PC-9 (cell line): ENCODE measurements at regions of chr6 and their contacts with region 1.

Region 1: GRCh38 chr6:36851149-36851614 is 11.9 kb upstream of the CPNE5 start:
- DNase-seq: peak; percentile 34 to 47
- H3K4me3 ChIP-seq: no peak overlapping the region
- H3K27ac ChIP-seq: no peak overlapping the region
- H3K4me1 ChIP-seq: peaks cover 22% of the 10 kb centered on the region
- H3K27me3 ChIP-seq: no peaks in the 10 kb centered on the region
- CTCF ChIP-seq: peak; percentile 93

Region 2: GRCh38 chr6:36563237-36563927 is 287.8 kb before region 1 on chr6:
- CTCF ChIA-PET with region 1: no interaction called
- POLR2A ChIA-PET with region 1: no interaction called
- intact Hi-C with region 1: no loop called
- DNase-seq: no peak
- H3K4me3 ChIP-seq: no peak overlapping the region
- H3K27ac ChIP-seq: no peak overlapping the region
- H3K4me1 ChIP-seq: peaks cover 12% of the 10 kb centered on the region
- H3K27me3 ChIP-seq: no peaks in the 10 kb centered on the region
- CTCF ChIP-seq: no peak

Region 3: GRCh38 chr6:36765594-36766398 is 85.4 kb before region 1 on chr6:
- CTCF ChIA-PET with region 1: interaction called, 17 read pairs
- POLR2A ChIA-PET with region 1: no interaction called
- intact Hi-C with region 1: loop called (anchors 1 kb)
- DNase-seq: peak; percentile 50 to 78
- H3K4me3 ChIP-seq: no peak overlapping the region
- H3K27ac ChIP-seq: no peak overlapping the region
- H3K4me1 ChIP-seq: peaks cover 24% of the 10 kb centered on the region
- H3K27me3 ChIP-seq: no peaks in the 10 kb centered on the region
- CTCF ChIP-seq: peak; percentile 92

Region 4: GRCh38 chr6:36827261-36828079 is 23.7 kb before region 1 on chr6:
- CTCF ChIA-PET with region 1: interaction called, 10 read pairs
- POLR2A ChIA-PET with region 1: interaction called, 53 read pairs
- intact Hi-C with region 1: no loop called
- DNase-seq: peak; percentile 70 to 83
- H3K4me3 ChIP-seq: no peak overlapping the region
- H3K27ac ChIP-seq: no peak overlapping the region
- H3K4me1 ChIP-seq: peaks cover 13% of the 10 kb centered on the region
- H3K27me3 ChIP-seq: no peaks in the 10 kb centered on the region
- CTCF ChIP-seq: no peak

Region 5: DNA sequence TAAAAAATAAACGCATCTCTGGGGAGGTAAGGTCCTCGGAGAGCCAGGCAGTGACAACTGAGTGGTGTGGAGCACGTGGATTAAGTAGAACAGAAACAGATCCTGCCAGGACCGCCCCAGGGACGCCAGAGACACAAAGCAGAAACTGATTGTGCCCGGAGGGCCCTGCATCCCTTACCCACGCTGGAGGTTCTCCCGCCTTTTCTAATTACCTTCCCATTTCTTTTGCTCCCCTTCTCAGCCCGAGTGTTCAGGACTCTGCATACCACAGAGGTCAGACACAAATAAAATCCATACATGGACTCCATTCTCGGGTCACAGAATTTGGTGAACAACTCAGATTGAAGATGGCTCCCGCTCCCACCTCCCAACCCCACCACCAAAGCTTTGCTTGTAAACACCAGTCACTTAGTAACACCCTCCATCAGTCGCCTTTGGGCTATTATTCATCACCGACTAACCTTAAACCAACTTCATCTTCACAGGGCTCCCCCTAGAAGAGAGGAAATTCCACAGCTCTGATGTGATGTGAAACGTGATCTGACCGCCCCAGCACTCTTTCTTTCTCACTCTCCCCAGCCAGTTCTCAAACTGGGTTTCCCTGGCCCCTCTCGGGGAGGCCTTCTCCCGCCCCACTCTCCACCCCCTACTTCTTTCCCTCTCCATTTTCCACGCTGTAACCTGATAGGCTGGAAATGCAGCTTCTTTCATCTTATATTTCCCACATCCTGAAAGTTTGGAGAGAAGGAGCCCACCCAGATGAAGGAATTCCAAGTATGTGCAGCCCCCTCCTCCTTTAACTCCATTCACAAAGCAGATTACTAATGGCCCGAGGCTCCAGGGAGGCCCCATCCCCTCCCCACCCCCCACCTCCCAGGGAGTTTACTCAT is 286.3 kb after region 1 on chr6:
- CTCF ChIA-PET with region 1: no interaction called
- POLR2A ChIA-PET with region 1: interaction called, 25 read pairs
- intact Hi-C with region 1: no loop called
- DNase-seq: peak; percentile 81 to 98
- H3K4me3 ChIP-seq: peak overlapping the region; percentile 56
- H3K27ac ChIP-seq: peak overlapping the region; percentile 98
- H3K4me1 ChIP-seq: peaks cover 88% of the 10 kb centered on the region
- H3K27me3 ChIP-seq: no peaks in the 10 kb centered on the region
- CTCF ChIP-seq: no peak